ENCODE measurements at regions of chr19 and their contacts with region 1.

Region 1: DNA sequence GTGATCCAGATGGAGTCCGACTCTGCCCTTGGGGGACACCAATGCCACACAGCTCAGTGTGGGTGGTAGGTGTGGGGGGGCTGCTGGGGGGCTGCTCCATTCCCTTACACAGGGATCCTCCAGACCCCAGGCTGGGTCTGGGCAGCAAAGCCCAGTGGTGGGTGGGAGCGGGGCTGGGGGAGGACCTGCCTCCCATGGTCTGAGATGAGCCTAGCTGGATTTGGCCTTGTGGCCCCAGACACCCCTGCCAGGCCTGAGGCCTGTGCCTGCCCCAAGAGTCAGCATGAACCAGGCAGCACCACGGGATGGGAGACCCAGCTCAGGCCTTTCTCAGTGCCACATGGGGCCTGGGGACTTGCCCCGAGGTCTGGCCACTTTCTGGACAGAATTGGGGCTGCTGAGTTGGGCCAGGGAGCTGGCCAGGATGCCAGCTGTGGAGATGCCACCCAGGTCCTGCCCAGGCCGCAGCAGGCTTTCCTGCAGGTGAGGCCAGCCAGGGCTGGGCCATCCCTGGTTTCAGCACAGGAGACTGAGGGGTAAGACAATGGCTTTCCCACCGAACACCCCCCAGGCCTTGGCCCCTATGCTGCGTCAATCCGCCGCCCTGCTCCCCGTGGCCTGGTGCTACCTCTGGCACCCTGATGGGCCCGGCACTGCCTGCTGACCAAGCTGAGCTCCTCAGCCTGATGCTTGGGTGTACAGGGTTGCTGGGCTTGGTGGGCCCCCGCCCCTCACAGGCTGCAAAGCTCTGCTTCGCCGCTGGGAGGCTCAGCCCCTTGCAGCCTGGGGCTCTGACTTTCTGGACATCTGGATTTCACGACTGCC is 24.2 kb downstream of the CEBPG start:
- DNase-seq: peak; percentile 52
- ATAC-seq: peak; percentile 37
- H3K4me3 Mint-ChIP-seq: no peak overlapping the region
- H3K27ac Mint-ChIP-seq: 0 out of 2 replicates have a peak overlapping the region, but pooled peaks have one; percentile 49
- H3K4me1 Mint-ChIP-seq: peaks cover 10% of the 10 kb centered on the region
- H3K27me3 Mint-ChIP-seq: no peaks in the 10 kb centered on the region
- CTCF ChIP-seq: no peak

Region 2: GRCh38 chr19:33373701-33374421 is 23.9 kb before region 1 on chr19 and contains the start of gene CEBPG:
- CTCF ChIA-PET with region 1: interaction called, 16 read pairs
- POLR2A ChIA-PET with region 1: interaction called, 10 read pairs
- DNase-seq: peak; percentile 44
- ATAC-seq: peak; percentile 9
- H3K4me3 Mint-ChIP-seq: peak within 1 kb of the TSS; percentile 84
- H3K27ac Mint-ChIP-seq: peak within 1 kb of the TSS; percentile 81
- H3K4me1 Mint-ChIP-seq: peaks cover 45% of the 10 kb centered on the region
- H3K27me3 Mint-ChIP-seq: peaks cover 7% of the 10 kb centered on the region
- CTCF ChIP-seq: no peak
- total RNA-seq, gene CEBPG: 28.9 to 33.1 TPM (median 30.4 TPM) in 3 replicates

Region 3: DNA sequence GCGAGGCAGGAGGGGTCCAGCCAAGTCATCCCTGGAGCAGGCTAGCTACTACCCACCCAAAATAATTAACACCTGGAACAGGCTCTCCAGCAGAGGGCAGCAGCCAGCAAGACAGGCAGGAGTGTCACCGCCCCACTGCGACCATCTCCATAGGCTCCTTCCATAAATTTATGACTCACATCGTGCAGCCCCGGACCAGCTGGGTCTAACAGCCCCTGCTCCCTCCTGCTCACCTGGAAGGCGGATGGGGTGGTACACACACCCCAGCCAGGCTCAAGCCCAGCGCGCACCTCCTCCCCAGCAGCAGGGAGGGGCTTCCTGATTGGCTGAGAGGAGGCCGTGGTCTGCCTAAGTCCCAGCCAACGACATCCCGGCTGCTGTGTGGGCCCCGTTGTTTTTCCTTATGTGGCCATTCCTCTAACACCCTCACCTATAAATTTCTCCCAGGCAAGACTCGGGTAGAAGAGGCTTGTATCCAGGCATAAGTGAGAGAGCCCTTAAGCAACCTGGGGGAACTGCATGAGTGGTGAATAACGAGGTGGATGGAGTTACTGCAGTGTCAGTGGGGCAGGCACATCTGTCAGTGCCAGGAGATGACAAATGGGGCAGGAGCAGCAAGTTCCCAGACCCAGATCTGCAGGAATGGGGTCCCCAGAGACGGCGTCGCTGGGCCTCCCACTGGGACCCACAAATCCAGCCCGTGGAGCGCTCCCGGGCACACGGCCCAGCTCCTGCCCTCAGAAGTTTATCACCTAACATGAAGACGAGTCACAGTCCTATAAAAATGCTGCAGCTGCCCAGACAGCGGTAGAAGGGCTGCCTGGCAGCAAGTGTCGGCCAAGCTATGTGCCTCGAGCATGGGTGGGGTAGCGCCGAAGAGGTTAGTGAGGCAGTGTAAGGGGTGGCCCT is 18.8 kb after region 1 on chr19:
- CTCF ChIA-PET with region 1: interaction called, 47 read pairs
- POLR2A ChIA-PET with region 1: no interaction called
- DNase-seq: peak; percentile 87
- ATAC-seq: peak; percentile 81
- H3K4me3 Mint-ChIP-seq: peak overlapping the region; percentile 63
- H3K27ac Mint-ChIP-seq: no peak overlapping the region; the same call in 1 of the 2 replicates
- H3K4me1 Mint-ChIP-seq: peaks cover 11% of the 10 kb centered on the region
- H3K27me3 Mint-ChIP-seq: no peaks in the 10 kb centered on the region
- CTCF ChIP-seq: peak; percentile 74